SK-N-SH (cell line): ENCODE measurements at regions of chr1 and their contacts with region 1.

Region 1: DNA sequence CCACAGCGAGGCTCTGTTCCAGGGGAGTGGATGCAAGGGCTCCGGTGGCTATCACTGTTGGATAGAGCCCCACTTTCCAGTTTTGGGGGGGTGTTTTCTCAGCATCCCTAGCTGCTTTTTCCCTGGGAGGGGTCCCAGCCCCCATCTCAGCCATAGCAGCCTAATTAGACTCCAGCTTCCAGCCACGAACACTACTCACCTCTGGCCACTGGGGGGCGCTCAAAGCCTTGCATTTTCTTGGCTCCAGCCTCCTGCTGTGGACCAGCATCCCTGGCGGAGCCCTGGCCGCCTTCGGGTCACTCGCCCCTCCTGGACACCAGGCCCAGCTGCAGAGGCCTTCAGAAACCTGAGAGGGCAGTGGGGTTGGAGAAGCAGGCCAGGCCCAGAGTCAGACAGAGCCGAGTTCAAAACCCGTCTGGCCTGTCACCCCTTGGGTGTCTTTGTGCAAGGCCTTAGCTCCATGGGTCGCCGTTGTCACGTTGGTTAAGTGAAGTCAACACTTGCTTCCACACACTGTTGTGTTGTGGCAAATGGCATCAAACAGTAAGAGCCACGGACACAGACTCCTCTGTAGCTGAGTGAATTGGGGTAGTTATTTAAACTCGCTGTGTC is 93.5 kb upstream of the ACTL8 start:
- DNase-seq: peak; percentile 93
- H3K4me3 ChIP-seq: no peak overlapping the region; a peak in 1 of 4 replicates
- H3K27ac ChIP-seq: no peak overlapping the region
- H3K4me1 ChIP-seq: peaks cover 0 to 3% of the 10 kb centered on the region in 2 experiments; a peak in 1 of 4 replicates
- H3K27me3 ChIP-seq: no peaks in the 10 kb centered on the region
- CTCF ChIP-seq: peak; percentile 91
- EP300 ChIP-seq: no peak
- RAD21 ChIP-seq: peak; percentile 94

Region 2: GRCh38 chr1:17250601-17251000 is 411.1 kb before region 1 on chr1:
- CTCF ChIA-PET with region 1: no interaction called
- POLR2A ChIA-PET with region 1: no interaction called
- DNase-seq: no peak
- H3K4me3 ChIP-seq: no peak overlapping the region
- H3K27ac ChIP-seq: no peak overlapping the region
- H3K4me1 ChIP-seq: peaks cover 4 to 8% of the 10 kb centered on the region in 2 experiments; a peak in 1 of 4 replicates
- H3K27me3 ChIP-seq: no peaks in the 10 kb centered on the region
- CTCF ChIP-seq: no peak
- EP300 ChIP-seq: peak in 1 of 2 experiments; percentile 36; a peak in 1 of 4 replicates
- RAD21 ChIP-seq: no peak

Region 3: DNA sequence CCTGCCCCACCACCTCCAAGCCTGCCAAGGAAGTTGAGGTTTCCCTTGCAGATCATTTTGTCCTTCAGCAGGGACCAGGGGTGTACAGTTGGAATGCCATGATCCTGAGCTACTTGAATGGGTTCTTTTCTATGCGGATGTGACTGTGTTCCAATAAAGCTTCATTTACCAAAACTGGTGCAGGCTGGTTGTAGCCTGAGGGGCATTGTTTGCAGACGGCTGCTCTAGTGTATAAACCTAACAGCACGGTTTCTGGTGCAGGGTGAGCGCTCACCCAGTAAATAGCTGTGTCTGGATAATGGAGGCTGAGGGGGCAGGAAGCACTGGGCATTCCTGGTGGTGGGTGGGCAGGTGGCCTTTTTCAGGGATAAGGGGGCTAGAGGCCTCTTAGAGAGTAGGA is 20.7 kb after region 1 on chr1:
- CTCF ChIA-PET with region 1: interaction called, 10 read pairs
- POLR2A ChIA-PET with region 1: no interaction called
- DNase-seq: peak; percentile 72
- H3K4me3 ChIP-seq: no peak overlapping the region
- H3K27ac ChIP-seq: peak overlapping the region in 1 of 2 experiments; percentile 79; a peak in 2 of 4 replicates
- H3K4me1 ChIP-seq: peaks cover 0 to 42% of the 10 kb centered on the region in 2 experiments; a peak in 2 of 4 replicates
- H3K27me3 ChIP-seq: no peaks in the 10 kb centered on the region
- CTCF ChIP-seq: no peak
- EP300 ChIP-seq: no peak
- RAD21 ChIP-seq: no peak

Region 4: GRCh38 chr1:17732475-17732874 is 70.8 kb after region 1 on chr1:
- CTCF ChIA-PET with region 1: interaction called, 35 read pairs
- POLR2A ChIA-PET with region 1: no interaction called
- DNase-seq: no peak
- H3K4me3 ChIP-seq: no peak overlapping the region
- H3K27ac ChIP-seq: no peak overlapping the region
- H3K4me1 ChIP-seq: peaks cover 0 to 18% of the 10 kb centered on the region in 2 experiments; a peak in 1 of 4 replicates
- H3K27me3 ChIP-seq: no peaks in the 10 kb centered on the region
- CTCF ChIP-seq: no peak
- EP300 ChIP-seq: no peak
- RAD21 ChIP-seq: no peak

Region 5: DNA sequence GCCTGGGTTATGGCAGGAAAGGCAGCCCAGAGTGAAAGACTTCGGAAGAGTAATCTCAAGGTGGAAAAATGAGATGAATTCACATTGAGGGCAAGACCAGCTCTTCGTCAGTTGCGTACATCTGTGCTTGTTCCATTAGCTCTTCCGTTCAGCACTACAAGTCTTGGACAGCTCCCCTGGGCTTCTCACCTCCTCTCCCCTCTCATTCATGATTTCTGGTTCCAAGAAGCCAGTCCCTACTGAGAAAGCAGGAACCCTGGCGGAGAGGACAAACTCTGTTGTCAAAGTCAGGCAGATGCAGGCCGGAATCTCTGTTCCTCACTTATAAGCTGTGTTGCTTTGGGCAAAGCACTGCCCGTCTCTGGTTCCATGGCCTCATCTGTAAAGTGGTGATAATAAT is 170.0 kb after region 1 on chr1:
- CTCF ChIA-PET with region 1: interaction called, 30 read pairs
- POLR2A ChIA-PET with region 1: no interaction called
- DNase-seq: no peak
- H3K4me3 ChIP-seq: no peak overlapping the region
- H3K27ac ChIP-seq: no peak overlapping the region
- H3K4me1 ChIP-seq: peaks cover 0 to 32% of the 10 kb centered on the region in 2 experiments; a peak in 2 of 4 replicates
- H3K27me3 ChIP-seq: no peaks in the 10 kb centered on the region
- CTCF ChIP-seq: no peak
- EP300 ChIP-seq: no peak
- RAD21 ChIP-seq: no peak

Region 6: GRCh38 chr1:17933971-17934370 is 272.3 kb after region 1 on chr1:
- CTCF ChIA-PET with region 1: interaction called, 13 read pairs
- POLR2A ChIA-PET with region 1: no interaction called
- DNase-seq: peak; percentile 83
- H3K4me3 ChIP-seq: no peak overlapping the region
- H3K27ac ChIP-seq: peak overlapping the region in 1 of 2 experiments; percentile 87; a peak in 2 of 4 replicates
- H3K4me1 ChIP-seq: peaks cover 0 to 35% of the 10 kb centered on the region in 2 experiments; a peak in 2 of 4 replicates
- H3K27me3 ChIP-seq: no peaks in the 10 kb centered on the region
- CTCF ChIP-seq: no peak
- EP300 ChIP-seq: peak in 1 of 2 experiments; percentile 88; a peak in 2 of 4 replicates
- RAD21 ChIP-seq: peak; percentile 13; the same call in 1 of the 2 replicates